B cell (primary cell): ENCODE measurements at regions of chr6 and their contacts with region 1.

Region 1: DNA sequence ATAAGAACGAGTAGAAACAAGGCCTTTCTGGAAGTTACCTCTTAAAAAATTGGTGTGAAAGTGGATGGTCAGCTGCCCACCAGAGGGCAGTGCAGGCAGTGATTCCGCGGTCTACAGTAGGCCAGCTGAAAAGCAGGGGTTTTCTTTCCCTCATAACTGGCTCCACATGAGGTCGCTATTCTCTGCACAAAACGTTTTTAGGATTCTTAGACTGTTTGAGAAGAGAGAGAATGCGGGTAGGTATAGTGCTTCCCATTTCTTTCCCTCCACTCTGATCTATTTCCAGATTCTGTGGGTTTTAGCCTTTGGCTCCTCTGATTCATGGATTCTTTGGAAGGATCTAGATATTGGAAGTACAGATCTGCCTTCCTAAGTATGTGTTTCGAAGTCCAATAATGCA is 14.2 kb downstream of the FIG4 start:
- DNase-seq: peak; percentile 89
- ATAC-seq: peak; percentile 99
- H3K4me3 ChIP-seq: no peak overlapping the region
- H3K4me3 Mint-ChIP-seq: no peak overlapping the region
- H3K27ac ChIP-seq: no peak overlapping the region
- H3K27ac Mint-ChIP-seq: no peak overlapping the region
- H3K4me1 ChIP-seq: peaks cover 24 to 25% of the 10 kb centered on the region in 2 donors
- H3K4me1 Mint-ChIP-seq: peaks cover 65% of the 10 kb centered on the region
- H3K27me3 ChIP-seq: no peaks in the 10 kb centered on the region
- H3K27me3 Mint-ChIP-seq: no peaks in the 10 kb centered on the region
- CTCF ChIP-seq: peak; percentile 98

Region 2: DNA sequence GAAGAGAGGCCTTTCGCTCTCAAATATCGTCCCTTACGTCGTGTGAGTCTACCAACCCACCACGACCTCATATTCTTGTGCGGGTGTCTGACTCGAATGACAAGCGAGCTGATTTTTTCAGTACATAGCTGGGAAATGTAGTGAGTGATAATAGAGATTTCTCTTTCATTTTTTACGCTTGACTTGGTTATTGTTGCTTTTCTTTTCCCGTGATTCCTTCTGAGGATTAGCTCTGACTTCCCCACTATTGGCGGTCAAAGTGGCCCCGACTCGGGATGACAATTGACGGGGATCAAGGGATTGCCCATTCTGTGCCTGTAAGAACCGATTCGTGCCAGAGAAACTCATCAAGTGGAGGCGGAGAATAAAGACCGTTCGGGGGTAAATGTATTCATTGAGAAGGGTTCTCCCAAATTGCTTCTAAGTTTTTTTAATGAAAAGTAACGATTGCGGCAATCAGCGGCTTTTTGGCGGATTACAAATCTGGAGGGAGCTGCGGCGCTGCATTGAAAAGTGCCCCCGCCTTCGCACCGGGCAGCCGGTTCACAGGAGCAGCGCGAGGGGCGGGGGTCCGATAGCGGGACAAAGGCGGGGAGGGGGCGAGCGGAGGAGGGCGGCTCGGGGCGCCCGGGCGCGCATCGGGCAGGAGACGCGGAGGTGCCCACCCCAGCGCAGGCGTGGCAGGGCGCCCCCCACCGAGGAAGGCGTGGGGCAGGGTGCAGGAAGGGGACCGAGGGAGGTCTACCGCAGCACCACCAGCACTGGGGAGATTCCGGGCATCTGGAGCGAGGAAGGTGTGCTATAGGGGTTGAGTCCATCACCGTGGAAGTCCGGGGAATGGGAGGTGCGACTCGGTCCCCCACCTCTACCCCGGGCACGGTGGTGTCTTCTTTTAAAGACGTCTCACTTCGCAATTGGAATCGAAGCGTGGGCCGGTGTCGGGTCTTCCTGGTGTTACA is 1586.2 kb before region 1 on chr6:
- CTCF ChIA-PET with region 1: no interaction called
- POLR2A ChIA-PET with region 1: no interaction called
- intact Hi-C with region 1: no loop called
- DNase-seq: peak; percentile 60
- ATAC-seq: no peak
- H3K4me3 ChIP-seq: peak overlapping the region; percentile 35 to 74 (median 58)
- H3K4me3 Mint-ChIP-seq: peak overlapping the region; percentile 98
- H3K27ac ChIP-seq: no peak overlapping the region
- H3K27ac Mint-ChIP-seq: peak overlapping the region; percentile 63
- H3K4me1 ChIP-seq: peaks cover 58 to 59% of the 10 kb centered on the region in 2 donors
- H3K4me1 Mint-ChIP-seq: peaks cover 59% of the 10 kb centered on the region
- H3K27me3 ChIP-seq: peaks cover 0 to 88% (median 66%) of the 10 kb centered on the region in 4 experiments
- H3K27me3 Mint-ChIP-seq: peaks cover 80% of the 10 kb centered on the region
- CTCF ChIP-seq: no peak

Region 3: DNA sequence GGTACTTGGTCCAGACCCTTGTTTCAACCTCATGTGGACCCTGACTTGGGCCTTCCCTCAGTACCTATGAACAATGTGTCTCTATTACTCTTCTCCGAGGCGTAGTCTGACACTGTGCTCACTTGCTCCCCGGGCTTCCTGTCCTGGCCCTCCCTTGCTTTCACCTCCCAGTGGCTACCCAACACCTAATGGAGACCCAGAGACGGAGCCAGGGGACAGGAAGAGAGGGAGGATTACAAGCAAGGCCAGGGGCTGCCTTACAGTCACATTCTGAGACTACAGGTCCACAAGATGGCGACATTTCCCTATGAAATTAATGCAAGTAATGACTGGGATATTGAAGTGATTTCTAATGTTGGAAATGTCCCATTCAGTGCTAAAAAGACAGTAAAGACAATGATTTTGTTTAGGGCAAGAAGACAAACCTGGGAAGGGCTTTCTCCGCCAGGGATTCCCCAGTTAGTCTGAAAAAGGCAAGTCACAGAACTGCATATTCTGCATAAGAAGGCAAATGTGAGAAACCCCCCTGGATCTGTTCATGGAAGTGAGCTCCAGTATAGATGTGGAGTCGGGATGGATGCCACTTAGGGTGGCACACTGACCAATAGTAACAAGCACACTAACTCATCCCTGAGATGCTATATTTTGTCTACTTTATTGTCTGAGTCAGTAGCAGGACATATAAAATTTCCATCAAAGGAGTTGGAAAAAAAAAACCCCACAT is 178.2 kb before region 1 on chr6:
- CTCF ChIA-PET with region 1: interaction called, 14 read pairs
- POLR2A ChIA-PET with region 1: no interaction called
- intact Hi-C with region 1: loop called (anchors 1 kb)
- DNase-seq: peak; percentile 74
- ATAC-seq: peak; percentile 66
- H3K4me3 ChIP-seq: no peak overlapping the region
- H3K4me3 Mint-ChIP-seq: no peak overlapping the region
- H3K27ac ChIP-seq: no peak overlapping the region
- H3K27ac Mint-ChIP-seq: no peak overlapping the region
- H3K4me1 ChIP-seq: peaks cover 0 to 3% of the 10 kb centered on the region in 2 donors
- H3K4me1 Mint-ChIP-seq: peaks cover 4% of the 10 kb centered on the region
- H3K27me3 ChIP-seq: no peaks in the 10 kb centered on the region
- H3K27me3 Mint-ChIP-seq: no peaks in the 10 kb centered on the region
- CTCF ChIP-seq: peak; percentile 74

Region 4: GRCh38 chr6:109690737-109691621 is 14.3 kb before region 1 on chr6 and contains the starts of genes AK9 and FIG4:
- CTCF ChIA-PET with region 1: interaction called, 73 read pairs
- POLR2A ChIA-PET with region 1: no interaction called
- intact Hi-C with region 1: loop called (anchors 1 kb)
- DNase-seq: peak; percentile 91
- ATAC-seq: peak; percentile 92
- H3K4me3 ChIP-seq: peak within 1 kb of the TSS; percentile 82 to 99 (median 93)
- H3K4me3 Mint-ChIP-seq: peak within 1 kb of the TSS; percentile 90
- H3K27ac ChIP-seq: peak within 1 kb of the TSS; percentile 77 to 93
- H3K27ac Mint-ChIP-seq: peak within 1 kb of the TSS; percentile 99
- H3K4me1 ChIP-seq: peaks cover 26 to 29% of the 10 kb centered on the region in 2 donors
- H3K4me1 Mint-ChIP-seq: peaks cover 39% of the 10 kb centered on the region
- H3K27me3 ChIP-seq: no peaks in the 10 kb centered on the region
- H3K27me3 Mint-ChIP-seq: no peaks in the 10 kb centered on the region
- CTCF ChIP-seq: peak; percentile 26
- total RNA-seq, gene AK9: 26.5 and 27.1 TPM in 2 replicates
- total RNA-seq, gene FIG4: 31.5 and 32.8 TPM in 2 replicates

Region 5: GRCh38 chr6:109718991-109719390 is 13.7 kb after region 1 on chr6:
- CTCF ChIA-PET with region 1: interaction called, 12 read pairs
- POLR2A ChIA-PET with region 1: no interaction called
- intact Hi-C with region 1: no loop called
- DNase-seq: no peak
- ATAC-seq: no peak
- H3K4me3 ChIP-seq: no peak overlapping the region
- H3K4me3 Mint-ChIP-seq: no peak overlapping the region
- H3K27ac ChIP-seq: no peak overlapping the region
- H3K27ac Mint-ChIP-seq: no peak overlapping the region
- H3K4me1 ChIP-seq: peaks cover 9 to 11% of the 10 kb centered on the region in 2 donors
- H3K4me1 Mint-ChIP-seq: peaks cover 15% of the 10 kb centered on the region
- H3K27me3 ChIP-seq: no peaks in the 10 kb centered on the region
- H3K27me3 Mint-ChIP-seq: no peaks in the 10 kb centered on the region
- CTCF ChIP-seq: no peak

Region 6: GRCh38 chr6:109783250-109783986 is 78.2 kb after region 1 on chr6:
- CTCF ChIA-PET with region 1: interaction called, 9 read pairs
- POLR2A ChIA-PET with region 1: no interaction called
- intact Hi-C with region 1: loop called (anchors 2 kb)
- DNase-seq: peak; percentile 22
- ATAC-seq: no peak
- H3K4me3 ChIP-seq: no peak overlapping the region
- H3K4me3 Mint-ChIP-seq: no peak overlapping the region
- H3K27ac ChIP-seq: no peak overlapping the region
- H3K27ac Mint-ChIP-seq: no peak overlapping the region
- H3K4me1 ChIP-seq: no peaks in the 10 kb centered on the region
- H3K4me1 Mint-ChIP-seq: peaks cover 9% of the 10 kb centered on the region
- H3K27me3 ChIP-seq: no peaks in the 10 kb centered on the region
- H3K27me3 Mint-ChIP-seq: no peaks in the 10 kb centered on the region
- CTCF ChIP-seq: peak; percentile 34

Region 7: GRCh38 chr6:109807881-109808280 is 102.6 kb after region 1 on chr6:
- CTCF ChIA-PET with region 1: no interaction called
- POLR2A ChIA-PET with region 1: no interaction called
- intact Hi-C with region 1: no loop called
- DNase-seq: no peak
- ATAC-seq: no peak
- H3K4me3 ChIP-seq: no peak overlapping the region
- H3K4me3 Mint-ChIP-seq: no peak overlapping the region
- H3K27ac ChIP-seq: no peak overlapping the region
- H3K27ac Mint-ChIP-seq: no peak overlapping the region
- H3K4me1 ChIP-seq: peaks cover 6 to 20% of the 10 kb centered on the region in 2 donors
- H3K4me1 Mint-ChIP-seq: peaks cover 13% of the 10 kb centered on the region
- H3K27me3 ChIP-seq: no peaks in the 10 kb centered on the region
- H3K27me3 Mint-ChIP-seq: no peaks in the 10 kb centered on the region
- CTCF ChIP-seq: no peak

Region 8: GRCh38 chr6:110053395-110054240 is 348.4 kb after region 1 on chr6:
- CTCF ChIA-PET with region 1: interaction called, 37 read pairs
- POLR2A ChIA-PET with region 1: no interaction called
- intact Hi-C with region 1: loop called (anchors 1 kb)
- DNase-seq: peak; percentile 53
- ATAC-seq: no peak
- H3K4me3 ChIP-seq: no peak overlapping the region
- H3K4me3 Mint-ChIP-seq: no peak overlapping the region
- H3K27ac ChIP-seq: no peak overlapping the region
- H3K27ac Mint-ChIP-seq: no peak overlapping the region
- H3K4me1 ChIP-seq: peaks cover 0 to 3% of the 10 kb centered on the region in 2 donors
- H3K4me1 Mint-ChIP-seq: no peaks in the 10 kb centered on the region
- H3K27me3 ChIP-seq: no peaks in the 10 kb centered on the region
- H3K27me3 Mint-ChIP-seq: peaks cover 7% of the 10 kb centered on the region
- CTCF ChIP-seq: peak; percentile 57

Region 9: GRCh38 chr6:110389689-110390382 is 684.6 kb after region 1 on chr6:
- CTCF ChIA-PET with region 1: interaction called, 116 read pairs
- POLR2A ChIA-PET with region 1: no interaction called
- intact Hi-C with region 1: loop called (anchors 1 kb)
- DNase-seq: no peak
- ATAC-seq: no peak
- H3K4me3 ChIP-seq: no peak overlapping the region
- H3K4me3 Mint-ChIP-seq: no peak overlapping the region
- H3K27ac ChIP-seq: no peak overlapping the region
- H3K27ac Mint-ChIP-seq: no peak overlapping the region
- H3K4me1 ChIP-seq: no peaks in the 10 kb centered on the region
- H3K4me1 Mint-ChIP-seq: no peaks in the 10 kb centered on the region
- H3K27me3 ChIP-seq: no peaks in the 10 kb centered on the region
- H3K27me3 Mint-ChIP-seq: no peaks in the 10 kb centered on the region
- CTCF ChIP-seq: no peak